ENCODE measurements at regions of chr17 and their contacts with region 1.

Region 1: DNA sequence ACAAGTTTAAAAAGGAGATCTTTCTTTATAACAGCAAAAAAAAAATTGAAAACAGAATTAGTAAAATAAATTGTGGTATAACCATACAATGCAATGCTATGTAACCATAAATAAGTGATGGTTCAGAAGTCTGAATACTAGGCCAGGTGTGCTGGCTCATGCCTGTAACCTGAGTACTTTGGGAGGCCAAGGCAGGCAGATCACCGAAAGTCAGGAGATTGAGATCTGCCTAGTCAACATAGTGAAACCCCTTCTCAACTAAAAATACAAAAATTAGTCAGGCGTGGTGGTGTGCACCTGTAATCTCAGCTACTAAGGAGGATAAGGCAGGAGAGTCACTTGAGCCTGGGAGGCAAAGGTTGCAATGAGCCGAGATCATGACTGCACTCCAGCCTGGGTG is 34.6 kb downstream of the CCT6B start:
- DNase-seq: no peak
- ATAC-seq: no peak
- H3K4me3 ChIP-seq: no peak overlapping the region
- H3K27ac ChIP-seq: no peak overlapping the region
- H3K4me1 ChIP-seq: no peaks in the 10 kb centered on the region
- H3K27me3 ChIP-seq: no peaks in the 10 kb centered on the region
- CTCF ChIP-seq: no peak

Region 2: GRCh38 chr17:34865732-34866131 is 60.9 kb before region 1 on chr17:
- intact Hi-C with region 1: loop called in 1 of 10 experiments (anchors 10 kb)
- DNase-seq: no peak
- ATAC-seq: no peak
- H3K4me3 ChIP-seq: no peak overlapping the region
- H3K27ac ChIP-seq: no peak overlapping the region
- H3K4me1 ChIP-seq: no peaks in the 10 kb centered on the region
- H3K27me3 ChIP-seq: peaks cover 0 to 5% (median 0%) of the 10 kb centered on the region in 7 donors
- CTCF ChIP-seq: no peak